ENCODE measurements at regions of chr1 and their contacts with region 1.

Region 1: GRCh38 chr1:19651141-19651737 is 7.1 kb downstream of the NBL1 start:
- DNase-seq: peak; percentile 67 to 87 (median 85)
- ATAC-seq: peak; percentile 81 to 83
- H3K4me3 ChIP-seq: no peak overlapping the region
- H3K27ac ChIP-seq: peak overlapping the region; percentile 11
- H3K4me1 ChIP-seq: peaks cover 6% of the 10 kb centered on the region
- H3K27me3 ChIP-seq: no peaks in the 10 kb centered on the region

Region 2: DNA sequence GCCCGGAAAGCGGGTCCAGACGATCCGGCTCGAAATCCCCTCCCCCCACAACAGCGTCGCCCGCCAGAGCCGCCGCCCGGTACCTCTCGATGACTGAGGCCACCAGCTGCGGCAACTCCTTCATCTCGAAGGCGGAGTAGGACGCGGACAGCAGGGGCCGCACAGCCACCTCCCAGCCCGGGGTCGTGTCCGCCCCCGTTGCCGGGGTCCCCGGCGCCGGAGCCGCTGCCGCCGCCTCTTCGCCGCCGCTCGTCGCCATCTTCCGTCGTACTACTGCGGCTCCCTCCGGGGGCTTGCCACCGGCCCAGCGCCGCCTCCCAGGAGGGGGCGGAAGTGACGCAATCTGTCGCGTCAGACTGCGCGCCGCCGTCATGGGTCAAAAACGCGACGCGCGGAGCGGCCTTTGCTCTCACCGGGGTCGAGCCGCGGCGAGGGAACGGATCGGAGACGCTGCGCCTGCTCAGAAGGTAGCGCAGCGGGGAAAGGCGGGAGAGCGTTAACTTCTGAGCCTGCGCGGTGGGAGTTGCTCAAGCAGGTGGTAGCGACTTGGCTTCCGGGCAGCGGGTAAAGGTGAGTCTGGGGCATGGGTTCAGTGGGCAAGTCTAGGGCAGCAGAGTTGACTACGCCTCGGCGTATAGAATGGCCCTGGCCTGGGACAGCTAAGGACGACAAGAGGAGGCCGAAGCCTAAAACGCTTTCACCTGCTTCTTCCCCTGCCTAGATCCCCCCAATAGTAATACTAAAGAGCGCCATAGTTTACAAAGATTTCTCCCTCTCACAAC is 441.1 kb before region 1 on chr1 and contains the start of gene UBR4:
- intact Hi-C with region 1: loop called in 1 of 4 experiments (anchors 10 kb)
- DNase-seq: peak; percentile 95 to 98 (median 98)
- ATAC-seq: peak; percentile 98 to 99
- H3K4me3 ChIP-seq: peak within 1 kb of the TSS; percentile 88
- H3K27ac ChIP-seq: peak within 1 kb of the TSS; percentile 93
- H3K4me1 ChIP-seq: peaks cover 7% of the 10 kb centered on the region
- H3K27me3 ChIP-seq: no peaks in the 10 kb centered on the region
- total RNA-seq, gene UBR4: 48.9 to 70.3 (median 63.7) TPM

Region 3: DNA sequence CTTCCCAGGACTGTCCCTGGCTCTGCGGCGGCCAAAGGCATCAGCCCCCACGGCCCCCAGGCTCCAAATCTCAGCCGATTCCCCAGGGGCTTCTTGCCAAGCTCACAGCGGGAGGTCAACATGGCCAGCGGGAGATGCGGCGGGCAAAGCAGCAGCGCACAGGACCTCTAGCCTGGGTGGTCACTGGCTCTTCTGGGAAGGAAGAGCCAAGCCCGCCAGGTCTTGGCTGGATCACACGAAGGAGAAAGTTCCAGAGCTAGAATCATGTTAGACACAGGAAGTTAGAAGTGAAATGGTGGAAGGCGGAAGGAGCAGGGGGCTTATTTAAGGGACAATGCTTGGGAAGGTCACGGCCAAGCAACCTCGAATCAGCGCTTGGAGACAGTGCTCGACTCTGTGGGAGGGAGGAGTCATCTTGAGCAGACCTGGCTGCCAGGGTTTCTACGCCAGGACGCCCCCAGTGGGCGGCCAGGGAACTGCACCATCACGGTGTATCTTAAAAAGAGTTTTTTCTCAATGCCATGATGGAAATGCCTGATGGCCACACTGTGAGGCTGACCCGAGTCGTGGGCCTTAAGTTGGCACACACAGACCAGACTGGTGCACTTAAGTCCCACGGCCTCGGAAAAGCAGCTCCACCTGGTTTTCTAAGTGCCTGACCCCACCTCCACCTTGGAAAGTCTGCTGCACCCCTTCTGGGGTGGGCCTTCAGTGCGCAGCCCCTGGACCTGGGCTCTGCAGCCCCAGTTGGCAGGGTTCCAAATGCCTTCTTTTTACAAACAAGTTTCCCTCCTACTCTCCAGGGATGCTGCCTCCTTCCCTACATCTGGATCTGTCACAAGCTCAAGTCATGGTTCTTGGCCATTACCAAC is 309.8 kb before region 1 on chr1:
- intact Hi-C with region 1: loop called (anchors 2 to 10 kb)
- DNase-seq: peak; percentile 73 to 89 (median 88)
- ATAC-seq: peak; percentile 15 to 42
- H3K4me3 ChIP-seq: no peak overlapping the region
- H3K27ac ChIP-seq: no peak overlapping the region
- H3K4me1 ChIP-seq: no peaks in the 10 kb centered on the region
- H3K27me3 ChIP-seq: no peaks in the 10 kb centered on the region

Region 4: DNA sequence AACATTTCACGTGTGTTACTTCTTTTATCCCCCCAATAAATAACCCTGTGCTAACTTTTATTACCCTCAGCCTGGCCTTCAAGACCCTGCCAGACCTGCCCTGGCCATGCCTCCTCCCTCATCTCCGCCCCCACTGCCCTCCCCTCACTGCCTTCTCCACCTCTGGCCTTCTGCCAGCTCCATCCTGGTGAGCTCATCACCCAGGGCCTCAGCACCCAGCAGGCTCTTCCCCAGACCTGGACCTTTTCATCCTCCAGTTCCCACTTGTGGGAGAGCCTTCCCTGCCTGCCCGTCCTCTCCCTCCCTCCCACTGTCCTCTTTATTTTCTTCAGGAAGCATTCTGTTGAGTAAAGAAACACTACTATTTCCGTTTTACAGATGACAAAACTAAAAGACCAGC is 267.1 kb before region 1 on chr1:
- intact Hi-C with region 1: loop called in 1 of 4 experiments (anchors 10 kb)
- DNase-seq: peak; percentile 51 to 77 (median 67)
- ATAC-seq: peak; percentile 34 to 54
- H3K4me3 ChIP-seq: no peak overlapping the region
- H3K27ac ChIP-seq: no peak overlapping the region
- H3K4me1 ChIP-seq: peaks cover 9% of the 10 kb centered on the region
- H3K27me3 ChIP-seq: no peaks in the 10 kb centered on the region

Region 5: GRCh38 chr1:19390901-19391595 is 260.2 kb before region 1 on chr1:
- intact Hi-C with region 1: loop called (anchors 5 to 10 kb)
- DNase-seq: peak; percentile 42 to 82 (median 75)
- ATAC-seq: peak in 1 of 2 donors; percentile 28
- H3K4me3 ChIP-seq: peak overlapping the region; percentile 7
- H3K27ac ChIP-seq: peak overlapping the region; percentile 70
- H3K4me1 ChIP-seq: peaks cover 12% of the 10 kb centered on the region
- H3K27me3 ChIP-seq: no peaks in the 10 kb centered on the region

Region 6: GRCh38 chr1:19462781-19463503 is 188.3 kb before region 1 on chr1:
- intact Hi-C with region 1: no loop called
- DNase-seq: peak in 1 of 3 donors; percentile 12
- ATAC-seq: no peak
- H3K4me3 ChIP-seq: no peak overlapping the region
- H3K27ac ChIP-seq: no peak overlapping the region
- H3K4me1 ChIP-seq: peaks cover 19% of the 10 kb centered on the region
- H3K27me3 ChIP-seq: no peaks in the 10 kb centered on the region

Region 7: GRCh38 chr1:19563324-19564097 is 87.7 kb before region 1 on chr1:
- intact Hi-C with region 1: no loop called
- DNase-seq: peak; percentile 68 to 87 (median 87)
- ATAC-seq: peak; percentile 87 to 92
- H3K4me3 ChIP-seq: no peak overlapping the region
- H3K27ac ChIP-seq: peak overlapping the region; percentile 53
- H3K4me1 ChIP-seq: peaks cover 5% of the 10 kb centered on the region
- H3K27me3 ChIP-seq: no peaks in the 10 kb centered on the region

Region 8: DNA sequence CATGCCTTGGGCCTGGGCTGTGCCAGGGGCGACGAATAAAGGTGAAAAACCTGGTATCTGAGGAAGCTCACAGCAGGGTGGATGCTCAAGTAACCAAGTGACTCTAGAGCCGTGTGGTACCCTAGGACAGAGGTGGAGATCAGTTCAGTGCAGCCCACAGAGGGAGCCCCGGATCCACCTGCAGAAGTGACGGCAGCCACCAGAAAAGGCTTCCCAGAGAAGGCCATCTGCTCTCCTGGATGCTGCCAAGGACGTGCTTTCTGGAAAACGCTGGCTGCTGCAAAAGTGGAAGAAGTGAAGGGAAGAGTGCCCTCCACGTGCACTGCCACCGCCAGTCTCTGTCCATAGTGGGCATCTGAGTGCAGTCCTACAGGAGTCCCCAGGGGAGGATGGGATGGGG is 120.8 kb after region 1 on chr1:
- intact Hi-C with region 1: no loop called
- DNase-seq: no peak
- ATAC-seq: no peak
- H3K4me3 ChIP-seq: no peak overlapping the region
- H3K27ac ChIP-seq: no peak overlapping the region
- H3K4me1 ChIP-seq: no peaks in the 10 kb centered on the region
- H3K27me3 ChIP-seq: no peaks in the 10 kb centered on the region

Measured in right cardiac atrium (tissue), 5 donors.